ENCODE measurements at regions of chr6 and their contacts with region 1.

Region 1: GRCh38 chr6:31971993-31972708 is at the start of gene DXO:
- DNase-seq: peak; percentile 99
- ATAC-seq: peak; percentile 96
- H3K4me3 Mint-ChIP-seq: peak within 1 kb of the TSS; percentile 96
- H3K27ac Mint-ChIP-seq: peak within 1 kb of the TSS; percentile 99
- H3K4me1 Mint-ChIP-seq: peaks cover 43% of the 10 kb centered on the region
- H3K27me3 Mint-ChIP-seq: no peaks in the 10 kb centered on the region
- total RNA-seq, gene DXO: 12.6 to 13.9 TPM

Region 2: GRCh38 chr6:31285486-31285885 is 686.7 kb before region 1 on chr6:
- CTCF ChIA-PET with region 1: no interaction called
- POLR2A ChIA-PET with region 1: no interaction called
- intact Hi-C with region 1: no loop called
- DNase-seq: no peak
- ATAC-seq: no peak
- H3K4me3 Mint-ChIP-seq: no peak overlapping the region
- H3K27ac Mint-ChIP-seq: no peak overlapping the region
- H3K4me1 Mint-ChIP-seq: no peaks in the 10 kb centered on the region
- H3K27me3 Mint-ChIP-seq: peaks cover 2% of the 10 kb centered on the region

Region 3: DNA sequence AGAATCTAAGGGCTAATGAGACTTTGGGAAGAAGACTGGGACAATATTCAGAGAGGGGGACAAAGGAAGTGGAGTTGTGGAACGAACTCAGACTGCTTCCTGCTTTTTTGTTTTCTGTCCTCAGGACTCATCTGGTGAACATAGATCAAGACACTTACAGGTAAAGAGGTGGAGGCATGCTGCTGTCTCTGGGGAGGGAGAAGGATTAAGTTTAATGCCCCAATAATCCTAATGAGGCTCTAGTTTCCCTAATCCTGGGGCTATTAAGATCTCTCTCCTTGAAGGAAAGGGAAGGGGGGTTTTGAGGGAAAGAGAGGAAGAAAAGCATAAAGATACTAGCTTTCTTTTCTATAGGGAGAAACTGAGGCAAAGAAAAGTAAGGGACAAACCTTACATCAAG is 227.7 kb before region 1 on chr6:
- CTCF ChIA-PET with region 1: no interaction called
- POLR2A ChIA-PET with region 1: no interaction called
- intact Hi-C with region 1: no loop called
- DNase-seq: no peak
- ATAC-seq: no peak
- H3K4me3 Mint-ChIP-seq: no peak overlapping the region
- H3K27ac Mint-ChIP-seq: no peak overlapping the region
- H3K4me1 Mint-ChIP-seq: peaks cover 15% of the 10 kb centered on the region
- H3K27me3 Mint-ChIP-seq: no peaks in the 10 kb centered on the region

Region 4: DNA sequence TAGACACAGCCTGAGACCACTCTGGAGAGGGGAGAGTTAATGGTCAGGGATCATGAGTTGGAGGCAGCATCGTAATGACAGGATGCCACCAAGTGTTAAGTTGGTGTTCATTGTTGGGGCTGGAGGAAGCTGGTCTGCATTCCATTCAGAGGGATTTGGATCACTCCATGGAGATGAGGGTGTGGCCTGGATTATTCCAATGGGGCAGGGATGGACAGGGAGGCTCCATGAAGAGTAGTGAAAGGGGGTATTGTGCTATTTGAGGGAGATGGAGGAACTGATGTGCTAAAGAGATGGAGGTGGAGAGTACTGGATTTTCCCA is 208.6 kb before region 1 on chr6:
- CTCF ChIA-PET with region 1: no interaction called
- POLR2A ChIA-PET with region 1: no interaction called
- intact Hi-C with region 1: no loop called
- DNase-seq: no peak
- ATAC-seq: no peak
- H3K4me3 Mint-ChIP-seq: no peak overlapping the region
- H3K27ac Mint-ChIP-seq: no peak overlapping the region
- H3K4me1 Mint-ChIP-seq: no peaks in the 10 kb centered on the region
- H3K27me3 Mint-ChIP-seq: no peaks in the 10 kb centered on the region

Region 5: GRCh38 chr6:31842056-31842455 is 130.1 kb before region 1 on chr6:
- CTCF ChIA-PET with region 1: no interaction called
- POLR2A ChIA-PET with region 1: no interaction called
- intact Hi-C with region 1: no loop called
- DNase-seq: no peak
- ATAC-seq: no peak
- H3K4me3 Mint-ChIP-seq: no peak overlapping the region
- H3K27ac Mint-ChIP-seq: no peak overlapping the region
- H3K4me1 Mint-ChIP-seq: peaks cover 20% of the 10 kb centered on the region
- H3K27me3 Mint-ChIP-seq: no peaks in the 10 kb centered on the region

Region 6: DNA sequence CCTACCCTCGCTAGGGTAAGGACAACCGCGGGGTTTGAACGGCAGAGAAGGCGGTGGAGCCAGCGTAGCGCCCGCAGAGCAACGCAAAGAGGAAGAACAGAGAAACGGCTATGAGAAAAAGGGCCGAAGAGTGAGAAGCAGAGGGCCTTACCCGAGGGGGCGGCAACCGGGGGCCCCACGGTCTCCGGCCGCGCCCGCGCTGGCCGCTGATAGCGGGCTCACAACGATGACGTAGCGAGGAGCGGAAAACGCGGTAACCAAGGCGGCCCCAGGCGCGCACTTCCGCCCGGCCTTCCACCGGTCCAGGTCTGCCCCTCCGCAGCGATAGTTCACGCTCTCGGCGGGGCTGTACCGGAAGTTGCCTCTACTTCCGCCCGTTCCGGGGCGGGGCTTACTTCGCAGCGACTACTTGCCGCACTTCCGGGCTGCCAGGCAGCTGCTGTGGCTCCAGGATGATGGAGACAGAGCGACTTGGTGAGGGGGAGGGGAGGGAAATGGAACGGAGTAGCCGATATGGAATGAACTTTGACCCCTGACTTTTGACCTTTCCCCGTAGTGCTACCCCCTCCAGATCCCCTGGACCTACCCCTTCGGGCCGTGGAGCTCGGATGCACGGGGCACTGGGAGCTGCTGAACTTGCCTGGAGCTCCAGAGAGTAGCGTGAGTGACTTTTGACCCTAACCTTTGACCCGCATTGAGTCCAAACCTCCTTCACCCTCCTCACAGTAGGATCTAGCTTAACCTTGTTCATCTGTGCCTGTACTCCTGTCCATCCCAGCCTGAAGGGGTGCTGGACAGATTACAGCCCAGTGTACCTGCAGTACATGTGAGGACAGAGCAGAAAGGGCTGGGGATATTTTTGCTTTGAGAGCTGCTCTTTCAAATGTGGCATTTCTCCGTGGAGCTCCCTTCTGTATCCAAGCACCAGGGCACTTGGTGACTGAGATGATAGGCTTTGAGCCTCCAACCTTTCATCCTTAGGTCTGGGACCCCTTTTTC is 13.1 kb before region 1 on chr6 and contains the starts of genes NELFE and SKIC2:
- CTCF ChIA-PET with region 1: interaction called, 6 read pairs
- POLR2A ChIA-PET with region 1: interaction called, 16 read pairs
- intact Hi-C with region 1: loop called (anchors 1 kb)
- DNase-seq: peak; percentile 99
- ATAC-seq: peak; percentile 99
- H3K4me3 Mint-ChIP-seq: peak within 1 kb of the TSS; percentile 95
- H3K27ac Mint-ChIP-seq: peak within 1 kb of the TSS; percentile 98
- H3K4me1 Mint-ChIP-seq: peaks cover 34% of the 10 kb centered on the region
- H3K27me3 Mint-ChIP-seq: no peaks in the 10 kb centered on the region
- total RNA-seq, gene NELFE: 74.3 to 95.1 TPM
- total RNA-seq, gene SKIC2: 90.2 to 104 TPM